Gastrocnemius medialis (tissue), 4 donors: ENCODE measurements at regions of chr3 and their contacts with region 1.

Region 1: DNA sequence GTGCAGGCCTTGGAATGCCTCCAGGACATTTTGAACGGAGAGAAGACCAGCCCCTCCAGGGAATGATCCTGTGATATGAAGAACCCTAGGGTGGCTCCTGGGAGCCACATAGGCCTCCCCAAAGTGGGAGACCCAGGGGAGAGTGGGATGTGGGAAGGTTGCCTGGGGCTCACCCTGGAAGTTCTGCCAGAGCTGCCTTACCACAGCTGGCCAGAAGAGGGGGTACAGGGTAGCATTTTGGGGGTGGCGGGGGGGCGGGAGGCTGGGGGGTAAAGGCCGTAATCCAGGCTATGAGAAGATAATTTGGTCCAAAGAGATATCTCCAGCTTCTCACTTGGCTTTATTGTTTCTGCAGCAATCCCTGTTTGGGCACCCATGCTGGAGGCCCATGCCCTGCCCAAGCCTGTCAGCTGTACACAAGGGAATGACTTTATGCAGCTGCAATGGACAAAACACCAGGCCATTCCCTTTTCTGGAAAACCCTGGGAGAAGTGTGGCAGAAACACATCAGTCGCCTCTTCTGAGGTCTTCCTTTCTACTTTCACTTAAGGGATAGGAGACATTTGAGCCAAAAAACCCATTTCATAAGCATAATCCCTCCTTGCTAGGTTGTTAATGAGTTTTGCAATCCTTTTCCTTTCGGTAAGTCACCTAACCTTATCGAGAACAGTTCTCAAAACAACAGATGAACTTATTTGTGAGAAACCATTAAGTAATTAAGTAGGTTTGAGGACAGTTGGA is 11.0 kb upstream of the MUSTN1 start:
- DNase-seq: no peak
- ATAC-seq: no peak
- H3K4me3 ChIP-seq: peak overlapping the region in 1 of 4 donors; percentile 22
- H3K27ac ChIP-seq: peak overlapping the region; percentile 96 to 98 (median 97)
- H3K4me1 ChIP-seq: peaks cover 84 to 86% of the 10 kb centered on the region in 2 donors
- H3K27me3 ChIP-seq: no peaks in the 10 kb centered on the region
- CTCF ChIP-seq: peak in 2 of 5 experiments; percentile 40 to 55
- POLR2A ChIP-seq: no peak

Region 2: DNA sequence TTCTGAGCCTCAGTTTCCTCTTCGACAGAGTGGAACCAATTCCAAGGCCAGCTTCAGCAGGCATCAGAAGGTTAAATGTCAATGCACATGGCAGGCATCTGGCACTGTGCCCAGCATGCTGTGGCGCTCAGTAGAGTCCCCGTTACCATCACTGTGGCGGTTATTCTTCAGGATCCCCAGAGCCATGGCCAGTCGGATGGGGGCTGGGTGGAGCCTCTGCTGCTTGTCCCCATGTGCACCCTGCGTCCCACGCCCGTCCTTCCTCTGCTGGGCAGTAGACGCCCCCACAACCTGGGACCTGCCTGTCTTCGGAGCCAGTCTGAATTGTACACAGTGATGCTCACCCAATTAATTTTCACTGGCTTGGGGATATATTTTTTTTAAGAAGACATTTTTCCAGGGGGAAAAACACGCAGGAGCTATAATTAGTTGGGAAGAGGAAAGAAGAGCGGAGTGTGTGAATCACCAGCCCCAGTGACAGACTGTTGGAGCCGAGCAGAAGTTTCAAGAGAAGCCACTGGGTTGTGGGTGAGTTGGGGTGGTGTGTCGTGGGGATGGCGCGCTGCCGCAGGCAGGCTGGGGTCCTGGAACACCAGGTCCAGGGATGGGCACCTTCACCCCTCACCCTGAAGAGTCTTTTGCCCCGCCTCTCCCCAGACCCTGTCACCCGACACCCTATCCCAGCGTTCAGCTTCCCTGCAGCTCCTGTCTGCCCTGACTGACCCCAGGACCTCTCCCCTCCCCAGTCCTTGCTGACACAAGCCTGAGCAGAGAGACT is 823.3 kb before region 1 on chr3:
- in situ Hi-C with region 1: no loop called
- intact Hi-C with region 1: loop called (anchors 2 kb)
- DNase-seq: peak; percentile 49 to 85
- ATAC-seq: peak; percentile 34 to 46
- H3K4me3 ChIP-seq: peak overlapping the region; percentile 42 to 59 (median 46)
- H3K27ac ChIP-seq: peak overlapping the region; percentile 95 to 98 (median 96)
- H3K4me1 ChIP-seq: peaks cover 92 to 93% of the 10 kb centered on the region in 2 donors
- H3K27me3 ChIP-seq: no peaks in the 10 kb centered on the region
- CTCF ChIP-seq: peak in 1 of 5 experiments; percentile 21
- POLR2A ChIP-seq: peak; percentile 64 to 71

Region 3: GRCh38 chr3:52238761-52239701 is 606.8 kb before region 1 on chr3 and contains the start of gene TWF2:
- in situ Hi-C with region 1: no loop called
- intact Hi-C with region 1: loop called (anchors 10 kb)
- DNase-seq: peak; percentile 45 to 59
- ATAC-seq: peak; percentile 20 to 28
- H3K4me3 ChIP-seq: peak within 1 kb of the TSS; percentile 72 to 95 (median 90)
- H3K27ac ChIP-seq: peak within 1 kb of the TSS; percentile 99 to 100 (median 100)
- H3K4me1 ChIP-seq: peaks cover 50 to 54% of the 10 kb centered on the region in 2 donors
- H3K27me3 ChIP-seq: no peaks in the 10 kb centered on the region
- CTCF ChIP-seq: peak in 4 of 5 experiments; percentile 31 to 60 (median 36)
- POLR2A ChIP-seq: peak; percentile 76 to 81
- total RNA-seq, gene TWF2: 99.2 to 222 (median 168) TPM

Region 4: DNA sequence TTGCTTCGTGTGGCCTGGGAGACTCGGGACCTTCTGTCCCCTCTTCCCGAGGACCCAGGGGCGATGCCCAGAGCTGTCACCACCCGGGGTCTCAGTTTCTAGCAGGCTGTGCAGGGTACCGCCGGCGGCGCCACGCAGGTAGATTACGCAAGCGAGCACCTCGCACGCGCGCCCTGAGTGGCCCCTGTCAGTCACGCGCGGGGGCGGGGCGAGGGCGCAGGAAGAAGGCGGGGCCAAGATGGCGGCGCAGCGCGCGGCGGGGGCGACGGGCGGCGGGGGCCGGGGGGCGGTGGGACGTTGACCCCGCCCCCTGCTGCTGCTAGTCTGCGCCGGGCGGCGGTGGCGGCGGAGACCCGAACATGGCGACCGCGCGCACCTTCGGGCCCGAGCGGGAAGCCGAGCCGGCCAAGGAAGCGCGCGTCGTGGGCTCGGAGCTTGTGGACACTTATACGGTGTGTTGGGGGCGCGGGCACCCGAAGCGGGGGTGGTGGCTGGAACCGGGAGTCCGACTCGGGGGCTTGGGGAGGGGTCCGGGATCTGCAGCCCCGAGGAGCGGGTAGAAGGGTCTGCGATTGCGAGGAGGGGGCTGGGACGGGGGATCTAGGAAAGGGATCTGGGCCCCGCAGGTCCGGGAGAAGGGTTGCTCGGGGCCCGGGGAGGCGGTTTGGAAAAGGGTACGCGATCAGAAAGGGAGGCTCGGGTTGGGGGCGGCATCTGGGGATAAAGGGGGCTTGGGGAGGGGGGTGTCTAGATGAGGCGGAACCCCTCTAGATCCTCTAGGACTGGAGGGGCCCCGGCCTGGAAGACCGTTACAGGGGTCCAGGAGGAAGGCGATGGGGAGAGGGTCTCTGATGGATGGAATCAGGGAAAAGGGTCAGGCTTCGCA is 390.3 kb before region 1 on chr3 and contains the start of gene NISCH:
- in situ Hi-C with region 1: no loop called
- intact Hi-C with region 1: loop called (anchors 10 kb)
- DNase-seq: peak; percentile 82 to 90
- ATAC-seq: peak; percentile 43 to 61
- H3K4me3 ChIP-seq: peak within 1 kb of the TSS; percentile 73 to 95 (median 86)
- H3K27ac ChIP-seq: peak within 1 kb of the TSS; percentile 94 to 99 (median 97)
- H3K4me1 ChIP-seq: peaks cover 38 to 39% of the 10 kb centered on the region in 2 donors
- H3K27me3 ChIP-seq: no peaks in the 10 kb centered on the region
- CTCF ChIP-seq: no peak
- POLR2A ChIP-seq: peak; percentile 73 to 76
- total RNA-seq, gene NISCH: 19.2 to 38.3 (median 25.0) TPM

Region 5: GRCh38 chr3:53130179-53131061 is 284.6 kb after region 1 on chr3 and contains the start of gene RFT1:
- in situ Hi-C with region 1: no loop called
- intact Hi-C with region 1: loop called (anchors 5 kb)
- DNase-seq: peak; percentile 96 to 98
- ATAC-seq: peak; percentile 85 to 90
- H3K4me3 ChIP-seq: peak within 1 kb of the TSS; percentile 80 to 93 (median 92)
- H3K27ac ChIP-seq: peak within 1 kb of the TSS; percentile 91 to 94 (median 94)
- H3K4me1 ChIP-seq: peaks cover 29 to 32% of the 10 kb centered on the region in 2 donors
- H3K27me3 ChIP-seq: no peaks in the 10 kb centered on the region
- CTCF ChIP-seq: peak in 2 of 5 experiments; percentile 44 to 49
- POLR2A ChIP-seq: peak; percentile 62 to 71
- total RNA-seq, gene RFT1: 2.5 to 5.7 (median 5.2) TPM

Region 6: GRCh38 chr3:53739966-53740365 is 894.1 kb after region 1 on chr3:
- in situ Hi-C with region 1: no loop called
- intact Hi-C with region 1: loop called (anchors 5 kb)
- DNase-seq: no peak
- ATAC-seq: no peak
- H3K4me3 ChIP-seq: no peak overlapping the region
- H3K27ac ChIP-seq: no peak overlapping the region
- H3K4me1 ChIP-seq: no peaks in the 10 kb centered on the region
- H3K27me3 ChIP-seq: no peaks in the 10 kb centered on the region
- CTCF ChIP-seq: no peak
- POLR2A ChIP-seq: no peak